ENCODE measurements at regions of chr3 and their contacts with region 1.

Region 1: GRCh38 chr3:196609343-196609775 is 30.1 kb upstream of the NRROS start:
- DNase-seq: peak; percentile 73 to 97
- H3K4me3 ChIP-seq: no peak overlapping the region
- H3K27ac ChIP-seq: no peak overlapping the region
- H3K4me1 ChIP-seq: peaks cover 0 to 3% (median 0%) of the 10 kb centered on the region in 4 experiments; a peak in 2 of 7 replicates
- H3K27me3 ChIP-seq: no peaks in the 10 kb centered on the region
- CTCF ChIP-seq: peak; percentile 73 to 95 (median 84)
- EP300 ChIP-seq: no peak
- POLR2A ChIP-seq: no peak
- RAD21 ChIP-seq: peak; percentile 96 to 99

Region 2: DNA sequence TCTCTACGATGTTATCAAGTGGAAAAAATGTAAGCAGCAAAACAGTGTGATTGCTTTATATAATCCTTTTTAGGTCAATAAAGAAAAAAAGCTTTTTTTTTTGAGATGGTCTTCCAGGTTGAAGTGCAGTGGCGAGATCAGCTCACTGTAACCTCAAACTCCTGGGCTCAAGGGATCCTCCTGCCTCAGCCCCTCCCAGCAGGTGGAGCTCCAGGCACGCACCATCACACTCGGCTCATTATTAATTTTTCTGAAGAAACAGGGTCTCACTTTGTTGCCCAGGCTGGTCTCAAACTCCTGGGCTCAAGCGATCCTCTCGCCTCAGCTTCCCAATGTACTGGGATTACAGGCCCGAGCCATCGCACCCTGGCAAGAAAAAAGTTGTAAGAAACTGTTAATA is 123.1 kb before region 1 on chr3:
- CTCF ChIA-PET with region 1: no interaction called
- POLR2A ChIA-PET with region 1: no interaction called
- DNase-seq: no peak
- H3K4me3 ChIP-seq: no peak overlapping the region
- H3K27ac ChIP-seq: no peak overlapping the region
- H3K4me1 ChIP-seq: no peaks in the 10 kb centered on the region
- H3K27me3 ChIP-seq: no peaks in the 10 kb centered on the region
- CTCF ChIP-seq: peak in 2 of 3 experiments; percentile 33 to 56; a peak in 3 of 4 replicates
- EP300 ChIP-seq: no peak
- POLR2A ChIP-seq: no peak
- RAD21 ChIP-seq: peak; percentile 40 to 42; a peak in 3 of 4 replicates

Region 3: GRCh38 chr3:196677353-196677752 is 68.0 kb after region 1 on chr3:
- CTCF ChIA-PET with region 1: interaction called, 11 read pairs
- POLR2A ChIA-PET with region 1: no interaction called
- DNase-seq: no peak
- H3K4me3 ChIP-seq: no peak overlapping the region
- H3K27ac ChIP-seq: no peak overlapping the region
- H3K4me1 ChIP-seq: no peaks in the 10 kb centered on the region
- H3K27me3 ChIP-seq: no peaks in the 10 kb centered on the region
- CTCF ChIP-seq: no peak
- EP300 ChIP-seq: no peak
- POLR2A ChIP-seq: no peak
- RAD21 ChIP-seq: no peak